A549 (cell line): ENCODE measurements at regions of chr19 and their contacts with region 1.

Region 1: DNA sequence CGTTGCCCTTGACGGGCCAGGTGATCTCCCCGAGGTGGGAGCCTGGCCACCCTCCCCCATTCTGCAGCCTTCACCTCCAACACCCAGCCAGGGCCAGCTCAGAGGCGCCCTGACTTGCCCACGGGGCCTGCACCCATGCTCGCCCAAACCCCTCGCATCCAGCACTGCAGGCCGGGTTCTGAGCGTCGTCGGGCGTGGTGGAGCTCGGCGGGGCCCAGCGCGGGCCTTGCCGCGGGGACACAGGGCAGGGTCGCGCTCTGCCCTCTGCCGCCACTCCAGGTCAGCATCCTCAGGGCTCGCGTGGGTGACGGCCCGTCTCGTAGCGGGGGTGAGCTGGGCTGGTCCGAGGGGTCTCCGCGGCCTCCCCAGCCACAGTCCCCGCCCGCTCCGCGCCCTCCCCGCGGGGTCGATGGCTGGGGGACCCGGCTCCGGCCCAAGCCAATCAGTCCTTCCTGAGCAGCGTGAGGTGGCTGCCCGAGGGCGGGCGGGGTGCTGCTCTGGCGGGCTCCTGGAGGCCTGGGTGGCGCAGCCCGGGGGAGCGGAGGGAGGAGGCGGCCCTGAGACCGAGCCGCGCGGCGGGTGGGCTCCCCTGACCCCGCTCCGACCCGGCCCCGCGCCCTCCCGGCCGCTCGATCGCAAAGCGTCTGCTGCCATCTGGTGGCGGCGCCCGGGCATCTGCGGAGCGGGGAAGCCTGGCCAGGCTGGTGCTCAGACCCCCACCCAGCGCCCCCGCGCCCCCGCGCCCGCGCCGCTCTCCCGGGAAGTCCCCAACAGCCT is 61.4 kb downstream of the CCNE1 start:
- DNase-seq: peak; percentile 68 to 85
- ATAC-seq: peak; percentile 79 to 95
- H3K4me3 ChIP-seq: peak overlapping the region; percentile 70
- H3K27ac ChIP-seq: peak overlapping the region; percentile 74 to 84
- H3K4me1 ChIP-seq: peaks cover 9% of the 10 kb centered on the region
- CTCF ChIP-seq: peak; percentile 99
- EP300 ChIP-seq: no peak
- POLR2A ChIP-seq: no peak
- RAD21 ChIP-seq: peak; percentile 89 to 100

Region 2: DNA sequence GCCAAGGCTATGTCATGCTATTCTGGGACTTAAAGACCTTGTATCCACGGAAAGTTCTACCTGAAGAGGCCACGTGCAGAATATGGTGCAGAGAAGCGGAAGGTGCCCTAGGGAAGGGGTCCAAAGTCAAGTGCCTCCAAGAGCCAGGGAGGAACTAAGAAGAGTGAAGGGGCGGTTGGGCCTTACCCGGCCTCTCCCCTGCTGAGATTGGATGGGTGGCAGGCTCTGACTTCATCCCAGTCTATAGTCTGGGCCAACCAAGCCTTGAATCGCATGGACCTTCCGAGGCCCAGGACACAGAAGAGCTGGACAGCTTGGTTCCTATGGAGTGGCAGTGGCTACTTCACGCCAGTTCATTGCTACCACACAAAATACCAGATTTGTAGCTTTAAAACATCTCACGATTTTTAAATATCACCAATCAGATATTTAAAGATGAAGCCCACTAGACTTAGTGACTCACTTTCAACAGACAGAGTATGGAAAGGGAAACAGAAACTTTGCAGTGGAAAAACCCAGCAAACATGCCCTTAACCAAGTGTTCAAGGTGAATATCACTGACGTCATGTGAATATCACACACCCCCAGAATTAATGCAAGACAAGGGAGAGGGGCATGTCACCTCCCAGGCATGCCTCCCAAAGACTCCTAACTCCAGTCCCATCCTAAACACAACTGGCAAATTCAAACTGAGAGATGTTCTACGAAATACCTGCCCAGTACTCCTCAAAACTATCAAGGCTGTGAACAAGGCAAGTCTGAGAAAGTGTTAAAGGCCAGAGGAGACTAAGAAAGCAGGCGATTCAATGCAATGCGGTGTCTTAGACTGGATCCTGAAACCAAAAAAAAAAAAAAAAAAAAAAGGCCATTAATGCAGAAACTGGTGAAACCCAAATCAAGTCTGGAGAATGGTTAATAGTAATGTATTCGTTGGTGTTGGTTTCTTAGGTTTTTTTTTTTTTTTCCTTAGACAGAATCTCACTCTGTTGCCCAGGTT is 168.4 kb before region 1 on chr19:
- CTCF ChIA-PET with region 1: interaction called, 20 read pairs
- POLR2A ChIA-PET with region 1: no interaction called
- DNase-seq: no peak
- ATAC-seq: no peak
- H3K4me3 ChIP-seq: no peak overlapping the region
- H3K27ac ChIP-seq: no peak overlapping the region
- H3K4me1 ChIP-seq: no peaks in the 10 kb centered on the region
- CTCF ChIP-seq: no peak
- EP300 ChIP-seq: no peak
- POLR2A ChIP-seq: no peak
- RAD21 ChIP-seq: no peak

Region 3: GRCh38 chr19:29753190-29753933 is 119.8 kb before region 1 on chr19:
- CTCF ChIA-PET with region 1: interaction called, 301 read pairs
- POLR2A ChIA-PET with region 1: no interaction called
- DNase-seq: no peak
- ATAC-seq: peak; percentile 2 to 42; a peak in 3 of 6 replicates
- H3K4me3 ChIP-seq: no peak overlapping the region
- H3K27ac ChIP-seq: no peak overlapping the region
- H3K4me1 ChIP-seq: no peaks in the 10 kb centered on the region
- CTCF ChIP-seq: no peak
- EP300 ChIP-seq: no peak
- POLR2A ChIP-seq: no peak
- RAD21 ChIP-seq: no peak

Region 4: GRCh38 chr19:29785955-29786589 is 87.1 kb before region 1 on chr19:
- CTCF ChIA-PET with region 1: interaction called, 30 read pairs
- POLR2A ChIA-PET with region 1: no interaction called
- DNase-seq: peak in 1 of 2 experiments; percentile 53
- ATAC-seq: peak; percentile 50 to 79; a peak in 4 of 6 replicates
- H3K4me3 ChIP-seq: no peak overlapping the region
- H3K27ac ChIP-seq: no peak overlapping the region
- H3K4me1 ChIP-seq: no peaks in the 10 kb centered on the region
- CTCF ChIP-seq: peak; percentile 56
- EP300 ChIP-seq: no peak
- POLR2A ChIP-seq: no peak
- RAD21 ChIP-seq: peak; percentile 38 to 46; a peak in 3 of 5 replicates

Region 5: GRCh38 chr19:29844891-29845572 is 28.2 kb before region 1 on chr19:
- CTCF ChIA-PET with region 1: interaction called, 348 read pairs
- POLR2A ChIA-PET with region 1: no interaction called
- DNase-seq: peak; percentile 92 to 99
- ATAC-seq: peak; percentile 78 to 88
- H3K4me3 ChIP-seq: peak overlapping the region; percentile 57
- H3K27ac ChIP-seq: peak overlapping the region; percentile 61 to 84
- H3K4me1 ChIP-seq: peaks cover 20% of the 10 kb centered on the region
- CTCF ChIP-seq: no peak
- EP300 ChIP-seq: no peak
- POLR2A ChIP-seq: peak; percentile 72
- RAD21 ChIP-seq: no peak

Region 6: DNA sequence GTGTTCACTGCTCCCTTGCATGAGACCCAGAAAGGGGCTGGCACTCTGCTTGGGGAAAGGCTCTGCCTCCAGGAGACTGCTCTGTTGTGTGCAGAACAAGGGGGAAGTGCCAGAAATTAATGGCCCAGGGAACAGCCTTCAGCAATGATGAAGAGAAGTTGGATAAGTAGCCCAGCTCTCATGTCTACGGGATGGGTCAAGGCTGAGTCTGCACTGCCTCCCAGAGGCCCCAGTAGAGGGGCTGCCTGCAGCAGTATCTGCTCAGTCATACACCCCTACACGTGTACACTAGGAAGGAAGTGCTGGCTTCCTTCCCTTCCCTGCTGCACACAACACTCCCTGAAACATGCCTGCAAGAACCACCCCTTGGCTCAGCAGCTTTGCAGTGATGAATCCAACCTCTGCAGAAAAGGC is 14.2 kb after region 1 on chr19:
- CTCF ChIA-PET with region 1: interaction called, 45 read pairs
- POLR2A ChIA-PET with region 1: no interaction called
- DNase-seq: no peak
- ATAC-seq: peak; percentile 45 to 76
- H3K4me3 ChIP-seq: no peak overlapping the region
- H3K27ac ChIP-seq: no peak overlapping the region
- H3K4me1 ChIP-seq: no peaks in the 10 kb centered on the region
- CTCF ChIP-seq: no peak
- EP300 ChIP-seq: no peak
- POLR2A ChIP-seq: no peak
- RAD21 ChIP-seq: no peak